ENCODE measurements at regions of chr19 and their contacts with region 1.

Region 1: GRCh38 chr19:13060964-13061927 is 41.4 kb downstream of the LYL1 start:
- DNase-seq: peak; percentile 91
- CTCF ChIP-seq: peak; percentile 96

Region 2: GRCh38 chr19:12983542-12984142 is 77.6 kb before region 1 on chr19:
- CTCF ChIA-PET with region 1: interaction called, 270 read pairs
- POLR2A ChIA-PET with region 1: no interaction called
- DNase-seq: peak; percentile 88
- CTCF ChIP-seq: peak; percentile 95

Region 3: DNA sequence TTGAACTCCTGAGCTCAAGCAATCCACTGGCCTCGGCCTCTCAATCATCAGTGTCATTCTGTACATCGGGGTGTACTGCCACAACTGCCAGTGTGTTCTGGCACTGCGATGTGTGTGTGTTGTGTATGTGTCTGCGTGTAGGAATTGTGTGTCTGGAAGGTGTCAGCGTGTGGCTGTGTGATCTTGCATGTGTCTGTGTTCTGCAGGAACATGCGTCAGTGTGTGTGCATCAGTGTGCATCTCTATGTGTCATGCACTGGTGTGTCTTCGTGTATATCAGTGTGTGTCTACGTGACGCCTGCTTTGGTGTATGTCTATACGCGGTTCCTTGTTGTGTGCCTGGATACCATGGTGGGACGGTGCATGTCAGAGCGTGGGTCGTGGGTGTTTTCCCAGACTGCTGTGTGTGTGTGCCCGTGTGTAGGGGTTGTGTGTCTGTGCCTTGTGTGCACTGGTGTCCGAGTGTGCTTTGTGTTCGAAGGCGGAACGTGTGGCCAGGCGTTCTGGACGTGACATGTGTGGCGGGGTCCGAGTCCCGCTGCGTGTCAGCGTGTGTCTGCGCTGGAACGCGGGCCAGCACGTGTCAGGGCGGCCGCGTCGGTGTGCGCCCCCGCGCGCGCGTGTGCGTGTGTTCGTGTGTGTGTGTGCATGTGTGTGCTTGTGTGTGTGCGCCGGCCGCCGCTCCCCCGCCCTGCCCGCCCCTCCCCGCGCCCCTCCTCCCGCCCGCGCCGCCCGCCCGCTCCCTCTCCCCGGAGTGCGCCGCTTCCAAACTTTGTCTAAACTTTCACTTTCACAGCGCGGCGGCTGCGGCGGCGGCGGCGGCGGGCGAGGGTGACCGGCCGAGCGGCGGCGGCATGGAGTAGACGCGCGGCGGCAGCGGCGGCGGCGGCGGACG is 66.3 kb before region 1 on chr19 and contains the start of gene NFIX:
- CTCF ChIA-PET with region 1: interaction called, 16 read pairs
- POLR2A ChIA-PET with region 1: no interaction called
- DNase-seq: peak; percentile 73
- CTCF ChIP-seq: peak; percentile 12

Region 4: DNA sequence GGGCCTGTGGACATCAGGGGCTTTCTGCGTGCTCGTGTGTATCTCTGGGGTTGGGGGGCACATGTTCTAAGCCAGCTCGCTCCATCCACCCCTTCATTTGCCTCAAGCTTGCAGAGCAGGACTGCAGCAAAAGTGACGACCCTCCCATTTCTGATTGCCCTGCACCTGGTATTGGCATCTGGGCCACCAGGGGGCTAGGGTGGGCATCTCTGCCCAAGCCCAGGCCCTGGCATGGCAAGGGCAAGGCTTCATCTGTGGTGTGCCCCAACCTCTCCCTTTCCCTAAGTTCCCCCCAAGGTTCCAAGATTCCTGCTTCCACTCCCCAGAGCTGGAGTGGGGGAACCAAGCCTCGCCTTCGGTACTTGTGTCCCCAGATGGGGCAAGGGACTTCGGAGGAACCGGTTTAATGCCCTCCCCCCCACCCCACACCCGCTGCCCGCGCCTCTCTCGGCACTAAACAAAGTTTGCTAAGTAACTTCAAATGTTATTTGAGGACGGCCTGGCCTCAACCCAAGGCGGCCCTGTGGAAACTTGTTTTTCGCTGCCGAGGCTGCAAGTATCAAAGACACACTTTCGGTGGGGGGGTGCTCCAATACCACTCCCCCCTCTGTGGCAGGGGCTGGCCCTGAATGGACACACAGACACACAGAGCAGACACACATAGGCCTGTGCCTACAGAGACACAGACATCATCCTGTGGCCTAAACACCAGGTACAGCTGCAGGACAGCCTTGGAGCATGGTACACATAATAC is 53.8 kb before region 1 on chr19:
- CTCF ChIA-PET with region 1: interaction called, 25 read pairs
- POLR2A ChIA-PET with region 1: no interaction called
- DNase-seq: no peak
- CTCF ChIP-seq: no peak

Region 5: DNA sequence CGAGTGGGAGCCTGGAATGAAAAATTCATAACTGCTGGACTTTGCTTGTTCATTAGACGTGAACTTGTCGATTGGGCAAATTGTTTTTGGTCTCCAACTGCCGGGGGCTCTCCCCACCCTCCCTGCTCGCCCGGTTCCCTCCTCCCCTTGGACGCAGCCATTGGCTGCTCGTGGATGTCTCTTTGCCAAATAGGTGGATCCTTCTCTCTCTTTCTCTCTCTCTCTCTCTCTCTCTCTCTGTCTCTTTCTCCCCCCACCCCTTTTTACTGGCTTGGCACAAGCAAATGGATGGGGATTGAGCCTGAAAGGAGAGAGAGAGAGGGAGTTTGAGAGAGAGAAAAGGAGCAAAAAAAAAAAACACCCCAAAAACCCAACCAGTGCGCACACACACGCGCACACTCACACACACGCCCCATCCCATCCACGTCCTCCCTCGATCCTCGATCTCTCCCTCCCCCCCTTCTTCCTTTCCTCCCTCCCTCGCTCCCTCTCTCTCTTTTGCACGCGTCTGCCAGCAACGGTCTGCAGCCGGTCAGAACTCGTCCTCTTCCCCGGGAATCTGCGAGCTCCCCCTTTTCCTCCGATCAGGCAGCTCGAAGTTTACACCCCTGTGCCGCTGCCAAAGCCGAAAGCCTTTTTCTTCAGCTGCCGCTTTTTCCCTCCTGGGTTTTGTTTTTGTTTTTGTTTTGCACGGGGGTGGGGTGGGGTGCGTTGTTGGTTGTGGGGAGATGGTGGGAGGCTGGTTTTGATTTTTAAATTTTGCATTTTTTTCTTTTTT is 38.2 kb before region 1 on chr19:
- CTCF ChIA-PET with region 1: interaction called, 94 read pairs
- POLR2A ChIA-PET with region 1: no interaction called
- DNase-seq: peak; percentile 56
- CTCF ChIP-seq: no peak

Region 6: DNA sequence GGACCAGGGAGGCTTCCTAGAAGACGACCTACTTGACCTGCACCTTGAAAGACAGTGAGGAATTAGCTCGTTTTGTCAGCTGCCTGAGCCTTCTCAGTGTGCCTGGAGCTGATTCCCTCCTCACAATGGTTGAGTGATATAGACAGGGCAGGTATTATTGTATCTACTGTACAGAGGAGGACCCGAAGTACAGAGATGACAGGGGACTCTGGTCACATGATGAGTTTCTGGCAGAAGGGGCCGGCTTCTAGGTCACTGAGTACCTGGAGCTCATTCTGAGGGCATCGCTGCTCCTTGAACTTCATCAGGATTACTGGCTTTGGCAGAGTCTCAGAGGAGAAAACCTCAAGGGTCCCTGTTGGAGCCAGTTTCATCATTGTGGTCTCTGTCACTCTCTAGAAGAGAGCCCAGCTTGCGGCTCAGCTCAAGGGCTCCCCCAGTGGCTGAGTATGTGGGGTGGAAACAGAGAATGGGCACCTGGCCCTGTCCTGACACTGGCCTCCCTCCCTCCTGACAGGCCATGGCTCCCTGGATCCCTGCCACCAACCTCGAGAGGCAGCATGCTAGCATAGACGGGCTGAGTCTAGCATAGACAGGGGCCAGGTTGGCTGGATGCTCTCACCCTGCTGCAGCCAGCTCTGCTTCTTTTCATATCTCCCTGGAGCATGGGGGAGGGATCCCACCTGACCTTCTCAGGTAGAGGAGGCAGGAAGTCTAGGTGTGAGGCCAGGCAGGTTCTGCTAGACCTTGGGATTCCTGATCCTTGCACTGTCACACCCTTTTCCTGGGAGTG is 27.2 kb before region 1 on chr19:
- CTCF ChIA-PET with region 1: interaction called, 97 read pairs
- POLR2A ChIA-PET with region 1: no interaction called
- DNase-seq: peak; percentile 79
- CTCF ChIP-seq: peak; percentile 69

Region 7: DNA sequence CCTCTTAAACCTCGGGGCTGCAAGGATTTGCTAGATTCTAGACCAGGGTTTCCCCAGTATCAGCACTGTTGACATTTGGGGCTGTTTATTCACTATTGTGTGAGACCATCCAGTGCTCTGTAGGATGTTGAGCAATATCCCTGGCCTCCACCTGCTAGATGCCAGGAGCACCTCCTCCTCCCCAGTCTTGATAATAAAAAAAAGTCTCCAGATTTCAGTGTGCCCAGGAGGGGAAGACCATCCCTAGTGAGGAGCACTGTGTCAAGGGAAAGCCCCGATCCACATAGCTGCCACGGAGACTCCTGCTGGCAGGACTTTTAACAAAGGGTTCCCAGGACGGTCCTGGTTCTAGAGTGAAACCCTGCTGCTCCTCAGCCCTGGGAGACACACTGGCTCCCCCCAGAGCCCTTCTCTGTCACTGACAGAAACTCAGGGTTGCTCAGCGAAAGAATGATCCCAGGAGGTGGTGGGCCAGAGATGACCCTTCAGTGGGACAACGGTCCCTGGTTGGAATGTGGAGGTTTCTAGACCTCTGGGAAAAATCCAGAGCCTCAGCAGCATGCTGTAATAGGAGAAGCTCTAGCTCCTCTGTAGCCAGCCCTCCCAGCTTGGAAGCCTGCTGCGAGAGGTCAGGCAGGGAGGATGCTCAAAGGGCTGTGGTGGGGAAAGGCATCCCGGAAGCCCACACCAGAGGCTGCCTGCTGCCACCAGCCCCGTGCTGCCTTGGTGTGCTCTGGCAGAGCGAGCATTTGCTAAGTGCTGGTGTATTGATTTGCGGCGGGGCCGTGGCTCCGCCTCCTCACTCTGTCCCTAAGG is 21.2 kb after region 1 on chr19:
- CTCF ChIA-PET with region 1: interaction called, 102 read pairs
- POLR2A ChIA-PET with region 1: no interaction called
- DNase-seq: no peak
- CTCF ChIP-seq: peak; percentile 7

Measured in GM10248 (cell line).